ENCODE measurements at regions of chr6 and their contacts with region 1.

Region 1: DNA sequence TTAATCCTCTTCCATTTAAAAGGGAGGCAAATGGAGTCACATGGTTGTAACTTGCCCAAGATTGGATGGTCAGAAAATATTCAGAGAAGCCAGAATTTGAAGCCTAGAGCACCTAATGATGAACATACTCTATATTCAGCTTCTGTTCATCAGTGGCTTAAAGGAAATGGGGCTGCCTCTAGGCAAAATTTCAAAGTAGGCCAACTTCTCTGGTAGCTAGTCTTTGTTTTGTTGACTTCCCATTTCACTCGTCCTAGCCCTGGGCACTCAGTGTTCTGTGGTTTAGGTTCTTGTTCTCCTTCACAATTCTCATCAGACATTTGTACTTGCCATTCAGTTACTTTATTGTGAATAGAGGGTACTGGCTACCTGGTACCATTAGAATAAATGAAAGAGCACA is 13.2 kb downstream of the MAP3K7 start:
- DNase-seq: no peak
- H3K4me3 Mint-ChIP-seq: no peak overlapping the region
- H3K27ac Mint-ChIP-seq: no peak overlapping the region
- H3K4me1 Mint-ChIP-seq: peaks cover 5% of the 10 kb centered on the region
- H3K27me3 Mint-ChIP-seq: no peaks in the 10 kb centered on the region

Region 2: GRCh38 chr6:90533615-90534336 is 39.8 kb before region 1 on chr6:
- intact Hi-C with region 1: loop called (anchors 1 kb)
- DNase-seq: peak; percentile 66
- H3K4me3 Mint-ChIP-seq: peak overlapping the region; percentile 67
- H3K27ac Mint-ChIP-seq: peak overlapping the region; percentile 90
- H3K4me1 Mint-ChIP-seq: peaks cover 31% of the 10 kb centered on the region
- H3K27me3 Mint-ChIP-seq: no peaks in the 10 kb centered on the region

Measured in activated CD4-positive, alpha-beta T cell treated with anti-CD3 and anti-CD28 coated beads, Interleukin-2, amount 10 ng/mL, durations not matched to agents 24 days and 14 days (primary cell).